GM18951 (cell line): ENCODE measurements at regions of chr2 and their contacts with region 1.

Region 1: GRCh38 chr2:70301344-70302194 is at the start of gene FAM136A:
- POLR2A ChIP-seq: peak; percentile 92

Region 2: GRCh38 chr2:69890881-69891280 is 410.7 kb before region 1 on chr2:
- in situ Hi-C with region 1: no loop called
- POLR2A ChIP-seq: no peak

Region 3: GRCh38 chr2:69902213-69902922 is 399.2 kb before region 1 on chr2:
- in situ Hi-C with region 1: loop called (anchors 10 kb)
- POLR2A ChIP-seq: no peak

Region 4: DNA sequence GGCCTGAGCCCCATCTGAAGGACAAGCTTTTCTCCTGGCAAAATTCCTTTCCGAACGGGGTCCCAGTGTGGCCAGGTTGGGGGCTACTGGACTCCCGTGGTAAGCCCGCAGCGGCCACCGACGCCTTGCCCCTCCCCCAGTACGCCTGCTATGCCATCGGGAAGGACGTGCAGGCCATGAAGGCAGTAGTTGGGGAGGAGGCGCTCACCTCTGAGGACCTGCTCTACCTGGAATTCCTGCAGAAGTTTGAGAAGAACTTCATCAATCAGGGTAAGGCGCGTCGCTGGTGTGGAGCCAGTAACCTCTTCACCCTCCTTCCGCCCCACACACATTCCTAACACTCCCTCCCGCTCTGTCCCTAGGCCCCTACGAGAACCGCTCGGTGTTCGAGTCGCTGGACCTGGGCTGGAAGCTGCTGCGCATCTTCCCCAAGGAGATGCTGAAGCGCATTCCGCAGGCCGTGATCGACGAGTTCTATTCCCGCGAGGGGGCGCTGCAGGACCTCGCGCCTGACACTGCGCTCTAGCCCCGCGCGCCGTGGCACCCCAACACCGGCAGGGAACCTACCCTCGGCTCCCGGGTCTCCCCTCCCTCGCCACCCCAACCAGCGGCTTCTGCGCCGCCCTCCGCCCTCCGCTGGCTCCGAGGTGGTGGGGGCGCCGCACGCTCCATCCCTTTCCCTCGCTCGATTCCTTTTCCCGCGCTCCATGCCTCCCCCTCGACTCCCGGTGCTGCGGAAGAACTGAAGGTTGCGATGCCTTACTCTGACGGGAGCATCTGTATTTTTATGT is 663.2 kb after region 1 on chr2:
- in situ Hi-C with region 1: loop called (anchors 25 kb)
- POLR2A ChIP-seq: no peak